ENCODE measurements at regions of chr12 and their contacts with region 1.

Region 1: DNA sequence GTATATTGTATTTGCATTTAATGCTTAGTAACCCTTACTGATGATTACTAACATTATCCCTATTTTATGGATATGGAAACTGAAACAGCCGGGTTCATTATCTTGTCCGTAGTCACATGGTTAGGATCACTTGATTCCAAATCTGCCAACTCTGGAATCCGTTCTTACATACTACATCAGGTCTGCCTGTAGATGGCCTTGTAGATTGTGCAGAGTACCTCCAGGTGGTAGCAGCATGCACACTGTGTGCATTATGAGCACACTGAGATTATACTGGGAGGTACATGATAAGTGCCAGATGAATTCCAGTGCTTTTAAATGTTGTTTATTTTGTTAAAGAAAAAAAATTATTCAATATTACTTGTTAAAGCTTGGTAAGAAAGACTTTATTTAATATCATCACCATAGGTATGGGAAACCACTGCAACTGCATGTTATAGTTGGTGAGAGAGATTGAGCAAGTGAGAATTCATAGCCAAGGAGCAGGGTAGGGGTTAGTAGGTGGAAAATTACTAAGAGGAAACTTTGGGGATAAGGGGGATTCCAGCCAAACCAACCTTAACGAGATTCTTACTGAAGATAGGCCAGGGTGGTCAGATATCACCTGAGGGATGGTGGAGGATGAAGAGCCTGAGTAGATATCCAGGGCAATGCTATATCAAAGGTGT is 38.3 kb downstream of the SLC16A7 start:
- DNase-seq: no peak
- H3K4me3 ChIP-seq: no peak overlapping the region
- H3K4me3 Mint-ChIP-seq: no peak overlapping the region
- H3K27ac Mint-ChIP-seq: no peak overlapping the region
- H3K4me1 ChIP-seq: peaks cover 6% of the 10 kb centered on the region; the same call in 1 of the 2 replicates
- H3K4me1 Mint-ChIP-seq: no peaks in the 10 kb centered on the region
- H3K27me3 ChIP-seq: no peaks in the 10 kb centered on the region
- H3K27me3 Mint-ChIP-seq: no peaks in the 10 kb centered on the region
- CTCF ChIP-seq: peak in 1 of 2 experiments; percentile 15

Region 2: DNA sequence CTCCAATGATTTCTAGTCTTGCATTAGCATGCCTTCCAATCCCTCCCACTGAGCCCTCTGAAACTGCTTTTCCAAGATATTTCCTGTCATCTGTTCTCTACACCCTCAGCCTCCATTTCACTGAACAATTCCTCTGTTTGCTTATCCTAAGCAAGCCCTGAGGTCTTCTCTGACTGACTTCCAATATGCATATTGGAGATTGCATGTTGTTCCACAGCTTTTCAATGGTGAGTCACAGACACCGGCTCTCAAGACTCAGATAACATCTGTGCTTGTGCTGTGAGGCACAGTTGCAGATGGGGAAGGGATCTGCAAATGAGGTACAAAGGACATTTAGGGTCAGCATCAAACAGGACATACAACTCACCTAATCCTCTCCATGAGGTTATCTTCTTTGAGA is 102.7 kb after region 1 on chr12:
- CTCF ChIA-PET with region 1: no interaction called
- POLR2A ChIA-PET with region 1: no interaction called
- intact Hi-C with region 1: no loop called
- DNase-seq: peak in 1 of 2 experiments; percentile 32
- H3K4me3 ChIP-seq: no peak overlapping the region
- H3K4me3 Mint-ChIP-seq: peak overlapping the region; percentile 11
- H3K27ac Mint-ChIP-seq: peak overlapping the region; percentile 20
- H3K4me1 ChIP-seq: peaks cover 3% of the 10 kb centered on the region; the same call in 1 of the 2 replicates
- H3K4me1 Mint-ChIP-seq: peaks cover 7% of the 10 kb centered on the region
- H3K27me3 ChIP-seq: no peaks in the 10 kb centered on the region
- H3K27me3 Mint-ChIP-seq: no peaks in the 10 kb centered on the region
- CTCF ChIP-seq: no peak

Region 3: DNA sequence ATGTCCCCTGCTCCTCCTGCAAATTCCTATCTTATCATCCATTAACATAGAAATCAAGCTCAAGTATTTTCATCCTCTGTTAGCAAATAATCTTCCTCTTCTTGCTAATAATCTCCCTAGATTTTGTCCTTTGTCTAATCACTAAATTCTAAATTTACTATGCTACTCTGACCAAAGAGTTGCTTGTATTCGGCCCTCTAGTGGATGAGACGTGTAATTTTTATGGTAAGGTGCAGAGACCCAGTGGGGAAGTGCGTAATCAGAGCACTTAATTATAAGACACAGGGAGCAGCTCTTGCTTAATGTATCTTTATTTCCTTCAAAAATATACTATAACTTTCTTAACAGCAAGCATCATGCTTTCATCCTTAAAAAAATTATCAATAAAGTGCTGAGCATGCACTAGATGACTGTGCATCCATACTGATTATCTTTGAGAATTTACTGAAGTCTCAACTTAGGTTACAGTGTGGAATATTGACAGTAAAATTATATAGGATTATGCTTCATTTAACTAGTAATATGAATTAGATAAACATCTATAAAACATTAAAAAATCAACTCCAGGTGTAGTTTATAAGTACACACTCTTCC is 174.3 kb after region 1 on chr12:
- CTCF ChIA-PET with region 1: no interaction called
- POLR2A ChIA-PET with region 1: no interaction called
- intact Hi-C with region 1: loop called (anchors 1 kb)
- DNase-seq: peak in 1 of 2 experiments; percentile 17
- H3K4me3 ChIP-seq: no peak overlapping the region
- H3K4me3 Mint-ChIP-seq: no peak overlapping the region
- H3K27ac Mint-ChIP-seq: no peak overlapping the region
- H3K4me1 ChIP-seq: no peaks in the 10 kb centered on the region; the same call in 1 of the 2 replicates
- H3K4me1 Mint-ChIP-seq: no peaks in the 10 kb centered on the region
- H3K27me3 ChIP-seq: no peaks in the 10 kb centered on the region
- H3K27me3 Mint-ChIP-seq: peaks cover 2% of the 10 kb centered on the region
- CTCF ChIP-seq: peak; percentile 67 to 73

Measured in Caco-2 (cell line).